CD4-positive, alpha-beta T cell (primary cell): ENCODE measurements at regions of chr11 and their contacts with region 1.

Region 1: DNA sequence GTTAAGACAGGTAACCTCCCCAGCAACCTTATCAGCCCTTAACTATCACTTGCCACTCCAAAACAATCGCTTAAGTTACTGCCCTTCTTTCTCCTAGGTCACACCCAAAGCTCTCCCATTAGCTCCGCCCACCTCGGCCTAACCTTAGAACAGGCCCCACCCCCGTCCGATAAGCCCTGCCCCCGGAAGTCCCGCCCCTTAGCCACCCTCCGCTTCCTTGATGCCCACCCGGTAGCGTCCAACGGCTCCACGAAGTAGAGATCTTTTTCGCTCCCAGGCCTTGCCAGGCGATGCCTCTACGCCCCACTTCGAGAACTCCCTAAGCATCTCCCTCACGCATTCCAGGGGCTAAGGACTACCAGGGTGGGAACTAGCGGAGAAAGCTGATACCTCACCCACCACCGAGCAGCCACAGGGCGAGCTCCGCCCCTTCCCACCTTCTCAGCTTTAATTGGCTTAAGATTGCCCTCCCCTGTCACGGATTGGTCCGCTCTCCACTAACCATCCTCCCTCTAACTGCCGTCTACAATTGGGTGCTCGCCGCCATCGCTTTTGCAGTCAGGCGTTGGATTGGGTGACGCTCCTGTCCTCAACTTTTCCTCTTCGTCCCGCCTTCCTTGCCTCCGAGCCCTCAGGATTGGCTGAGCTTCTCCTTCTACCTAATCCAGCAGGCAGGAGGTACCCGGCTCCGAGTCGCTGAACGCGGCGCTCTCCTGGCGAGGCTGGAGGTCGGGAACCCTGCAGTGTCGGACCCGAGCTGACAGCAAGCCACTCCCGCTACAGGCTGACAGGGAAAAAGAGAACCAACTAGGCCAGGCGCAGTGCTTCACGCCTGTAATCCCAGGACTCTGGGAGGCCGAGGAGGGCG is at the start of gene ZBTB3:
- DNase-seq: peak; percentile 92 to 100 (median 97)
- ATAC-seq: peak; percentile 93
- H3K4me3 ChIP-seq: peak within 1 kb of the TSS; percentile 80
- H3K4me3 Mint-ChIP-seq: peak within 1 kb of the TSS; percentile 93
- H3K27ac ChIP-seq: peak within 1 kb of the TSS; percentile 84 to 88
- H3K27ac Mint-ChIP-seq: peak within 1 kb of the TSS; percentile 89
- H3K4me1 ChIP-seq: peaks cover 41% of the 10 kb centered on the region
- H3K4me1 Mint-ChIP-seq: peaks cover 35% of the 10 kb centered on the region
- H3K27me3 ChIP-seq: no peaks in the 10 kb centered on the region
- H3K27me3 Mint-ChIP-seq: no peaks in the 10 kb centered on the region
- CTCF ChIP-seq: no peak
- total RNA-seq, gene ZBTB3: 2.3 to 3.5 TPM

Region 2: DNA sequence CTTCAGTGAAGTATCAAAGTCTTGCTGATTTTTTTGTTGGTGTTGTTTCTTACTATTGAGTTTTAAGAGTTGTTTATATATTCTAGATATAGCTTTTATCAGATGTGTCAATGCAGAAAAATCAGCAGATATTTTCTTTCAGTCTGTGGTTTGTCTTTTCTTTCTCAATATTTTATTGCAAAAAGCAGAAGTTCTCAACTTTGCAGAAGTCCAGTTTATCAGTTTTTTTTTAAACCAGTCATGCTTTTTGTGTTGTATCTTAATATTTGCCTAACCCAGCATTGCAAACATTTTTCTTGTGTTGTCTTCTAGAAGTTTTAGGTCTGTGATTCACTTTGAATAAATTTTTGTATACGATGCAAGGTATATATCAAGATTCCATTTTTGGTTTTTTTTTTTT is 409.8 kb before region 1 on chr11:
- CTCF ChIA-PET with region 1: no interaction called
- POLR2A ChIA-PET with region 1: no interaction called
- intact Hi-C with region 1: no loop called
- DNase-seq: no peak
- ATAC-seq: no peak
- H3K4me3 ChIP-seq: no peak overlapping the region
- H3K4me3 Mint-ChIP-seq: no peak overlapping the region
- H3K27ac ChIP-seq: no peak overlapping the region
- H3K27ac Mint-ChIP-seq: no peak overlapping the region
- H3K4me1 ChIP-seq: no peaks in the 10 kb centered on the region
- H3K4me1 Mint-ChIP-seq: no peaks in the 10 kb centered on the region
- H3K27me3 ChIP-seq: no peaks in the 10 kb centered on the region
- H3K27me3 Mint-ChIP-seq: peaks cover 9% of the 10 kb centered on the region
- CTCF ChIP-seq: no peak

Region 3: DNA sequence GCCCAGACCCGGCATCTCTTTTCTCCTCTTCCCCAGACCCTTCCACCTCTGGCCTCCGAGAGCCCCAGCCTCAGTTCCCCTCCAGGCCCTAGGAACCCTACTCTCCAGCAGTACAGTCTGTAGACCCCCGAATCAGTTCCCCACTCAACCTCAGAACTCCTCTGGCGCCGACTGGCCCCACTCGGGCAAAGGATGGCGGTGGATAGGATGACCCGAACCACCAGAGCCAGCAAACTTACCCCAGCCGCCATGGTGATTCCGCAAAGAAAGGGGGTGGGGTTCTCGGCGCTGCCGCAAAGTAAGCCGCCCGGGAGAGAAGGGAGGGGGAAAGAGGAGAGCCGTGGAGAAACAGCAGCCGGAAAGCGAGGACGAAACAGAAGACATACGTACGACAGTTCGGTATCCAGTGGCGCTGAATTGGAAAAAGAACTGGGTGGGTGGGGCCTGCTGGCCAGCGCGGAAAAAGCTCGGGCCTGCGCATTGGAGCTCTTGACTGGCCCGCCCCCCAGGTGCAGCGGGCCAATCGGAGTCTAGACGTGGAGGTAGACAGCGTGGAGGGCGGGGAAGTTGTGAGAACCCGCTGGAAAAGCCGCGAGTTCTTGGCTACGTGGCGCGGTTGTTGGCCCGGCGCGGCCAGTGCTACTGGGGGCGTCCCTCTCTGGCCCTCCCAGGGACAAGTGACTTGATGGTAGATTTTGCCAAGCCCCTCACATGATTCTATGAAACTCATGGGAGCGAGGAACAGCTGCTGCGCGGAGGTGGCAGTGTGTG is 180.2 kb before region 1 on chr11 and contains the start of gene EEF1G:
- CTCF ChIA-PET with region 1: no interaction called
- POLR2A ChIA-PET with region 1: interaction called, 17 read pairs
- intact Hi-C with region 1: no loop called
- DNase-seq: peak; percentile 95 to 100 (median 97)
- ATAC-seq: peak; percentile 94
- H3K4me3 ChIP-seq: peak within 1 kb of the TSS; percentile 82
- H3K4me3 Mint-ChIP-seq: peak within 1 kb of the TSS; percentile 93
- H3K27ac ChIP-seq: peak within 1 kb of the TSS; percentile 76 to 83
- H3K27ac Mint-ChIP-seq: peak within 1 kb of the TSS; percentile 89
- H3K4me1 ChIP-seq: peaks cover 48% of the 10 kb centered on the region
- H3K4me1 Mint-ChIP-seq: peaks cover 55% of the 10 kb centered on the region
- H3K27me3 ChIP-seq: no peaks in the 10 kb centered on the region
- H3K27me3 Mint-ChIP-seq: no peaks in the 10 kb centered on the region
- CTCF ChIP-seq: no peak
- total RNA-seq, gene EEF1G: 2,181 to 2,269 TPM

Region 4: DNA sequence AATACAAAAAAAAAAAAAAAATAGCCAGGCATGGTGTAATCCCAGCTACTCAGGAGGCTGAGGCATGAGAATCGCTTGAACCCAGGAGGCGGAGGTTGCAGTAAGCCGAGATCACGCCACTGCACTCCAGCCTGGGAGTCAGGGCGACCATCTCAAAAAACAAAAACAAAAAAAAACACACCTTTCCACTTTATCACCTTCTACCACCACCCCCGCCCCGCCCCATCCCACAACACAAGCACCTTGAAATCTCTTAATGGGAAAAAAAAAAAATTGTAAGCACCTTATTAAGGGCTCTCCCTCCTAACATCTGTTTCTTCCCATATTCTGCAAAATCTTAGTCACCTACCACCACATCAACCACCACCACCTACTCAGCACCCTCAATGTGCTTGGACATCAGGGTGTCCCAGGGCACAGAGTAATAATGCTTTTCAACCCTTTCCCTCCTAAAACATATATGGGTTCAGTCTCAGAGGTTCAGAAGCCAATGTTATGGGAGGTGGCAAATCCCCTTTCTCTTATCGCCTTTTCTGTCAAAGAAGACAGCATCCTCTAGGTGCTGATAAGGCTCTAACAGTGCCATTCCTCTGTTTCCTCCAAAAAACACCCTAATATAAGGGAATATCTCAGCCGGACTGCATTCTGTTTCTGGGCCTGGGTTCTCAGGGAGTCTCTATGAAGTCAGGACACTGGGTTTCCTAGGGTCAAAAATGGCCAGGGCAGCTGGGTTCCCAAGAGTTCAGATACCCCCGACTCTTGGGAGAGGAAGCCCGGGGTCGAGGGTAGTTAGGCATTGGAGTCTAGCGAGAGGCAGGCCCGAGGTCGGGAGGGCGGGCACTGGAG is 101.6 kb before region 1 on chr11:
- CTCF ChIA-PET with region 1: no interaction called
- POLR2A ChIA-PET with region 1: interaction called, 13 read pairs
- intact Hi-C with region 1: no loop called
- DNase-seq: peak in 4 of 14 experiments; percentile 43 to 62 (median 51)
- ATAC-seq: peak; percentile 5
- H3K4me3 ChIP-seq: peak overlapping the region; percentile 96
- H3K4me3 Mint-ChIP-seq: peak overlapping the region; percentile 94
- H3K27ac ChIP-seq: peak overlapping the region; percentile 89 to 94
- H3K27ac Mint-ChIP-seq: peak overlapping the region; percentile 97
- H3K4me1 ChIP-seq: peaks cover 28% of the 10 kb centered on the region
- H3K4me1 Mint-ChIP-seq: peaks cover 17% of the 10 kb centered on the region
- H3K27me3 ChIP-seq: no peaks in the 10 kb centered on the region
- H3K27me3 Mint-ChIP-seq: no peaks in the 10 kb centered on the region
- CTCF ChIP-seq: no peak

Region 5: DNA sequence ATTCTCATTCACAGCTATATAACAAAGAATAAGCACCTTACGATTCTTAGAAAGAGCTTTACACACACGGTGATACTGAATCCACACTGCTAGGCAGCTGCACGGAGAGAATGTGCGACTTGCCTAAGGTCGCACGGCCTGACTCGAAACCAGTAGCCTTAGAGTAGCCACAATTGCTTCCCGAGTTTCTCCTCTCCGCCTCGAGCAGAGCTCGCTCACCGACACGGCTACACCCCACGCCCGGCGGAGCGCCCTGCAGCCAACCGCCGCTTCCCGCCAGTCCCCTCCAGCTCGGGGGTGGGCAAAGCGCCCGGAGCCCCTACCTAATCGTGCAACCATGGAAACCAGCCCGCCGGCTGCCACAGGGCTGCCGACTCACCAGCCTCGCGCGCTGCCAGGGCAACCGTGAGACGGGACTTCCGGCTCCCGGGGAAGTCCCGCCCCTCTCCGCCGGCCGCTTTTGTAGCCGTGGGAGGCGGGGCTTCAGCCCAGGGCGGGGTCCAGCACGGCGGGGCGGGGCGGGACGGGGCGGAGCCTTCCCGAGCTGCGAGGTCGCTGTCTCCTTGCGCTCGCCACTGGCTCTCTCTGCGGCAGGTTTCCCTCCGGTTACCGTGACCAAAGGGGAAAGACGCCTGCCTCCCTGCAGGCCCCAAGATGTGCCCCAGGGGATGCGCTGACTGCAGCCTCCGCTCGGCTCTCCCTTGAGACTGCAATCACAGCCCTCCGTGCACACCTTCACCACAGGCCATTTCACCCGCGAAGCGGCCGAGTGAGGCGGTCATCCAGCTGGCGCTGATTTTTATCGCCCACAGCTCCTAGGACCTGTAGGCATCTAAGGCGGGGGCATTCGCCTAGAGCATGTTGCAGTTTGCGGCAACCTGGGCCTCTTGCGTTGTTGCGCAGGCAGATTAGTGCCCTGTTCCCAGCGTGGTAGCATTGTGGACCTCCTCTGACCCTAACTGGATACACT is 47.8 kb before region 1 on chr11:
- CTCF ChIA-PET with region 1: no interaction called
- POLR2A ChIA-PET with region 1: interaction called, 36 read pairs
- intact Hi-C with region 1: no loop called
- DNase-seq: peak; percentile 90 to 97 (median 94)
- ATAC-seq: peak; percentile 62
- H3K4me3 ChIP-seq: peak overlapping the region; percentile 79
- H3K4me3 Mint-ChIP-seq: peak overlapping the region; percentile 86
- H3K27ac ChIP-seq: peak overlapping the region; percentile 65 to 84
- H3K27ac Mint-ChIP-seq: peak overlapping the region; percentile 92
- H3K4me1 ChIP-seq: peaks cover 49% of the 10 kb centered on the region
- H3K4me1 Mint-ChIP-seq: peaks cover 42% of the 10 kb centered on the region
- H3K27me3 ChIP-seq: no peaks in the 10 kb centered on the region
- H3K27me3 Mint-ChIP-seq: no peaks in the 10 kb centered on the region
- CTCF ChIP-seq: no peak

Region 6: DNA sequence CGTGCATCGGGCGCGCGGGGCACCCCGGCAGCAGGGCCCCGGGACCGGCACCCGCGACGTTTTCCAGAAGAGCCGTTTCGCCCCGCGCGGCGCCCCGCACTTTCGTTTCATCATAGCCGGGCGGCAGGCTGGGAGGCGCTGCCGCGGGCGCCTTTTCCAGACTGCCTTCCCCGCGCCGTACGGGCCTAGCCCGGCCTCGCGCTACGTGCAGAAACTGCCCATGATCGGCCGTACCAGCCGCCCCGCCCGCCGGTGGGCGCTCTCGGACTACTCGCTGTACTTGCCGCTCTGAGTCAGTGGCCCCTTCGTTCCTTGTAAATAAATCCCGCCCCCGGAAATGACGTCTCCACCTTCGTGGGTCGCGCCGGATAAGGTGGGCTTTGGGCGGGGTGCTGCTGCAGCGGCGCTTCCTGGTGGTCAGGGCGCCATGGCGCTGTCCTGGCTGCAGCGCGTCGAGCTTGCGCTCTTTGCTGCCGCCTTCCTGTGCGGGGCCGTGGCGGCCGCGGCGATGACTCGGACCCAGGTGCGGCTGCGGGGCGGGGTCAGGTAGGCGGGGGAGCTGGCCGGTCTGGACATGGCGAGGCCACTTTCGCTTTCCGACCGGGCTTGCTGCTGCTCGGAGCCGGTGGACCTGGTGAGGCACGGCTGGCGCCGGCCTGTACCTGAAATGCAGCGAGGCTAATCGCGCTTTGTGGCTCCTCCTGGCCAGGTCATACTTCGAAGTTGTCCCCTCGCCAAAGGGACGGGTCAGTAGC is 33.2 kb after region 1 on chr11 and contains the start of gene TMEM179B:
- CTCF ChIA-PET with region 1: interaction called, 42 read pairs
- POLR2A ChIA-PET with region 1: interaction called, 76 read pairs
- intact Hi-C with region 1: loop called in 1 of 2 experiments (anchors 5 kb)
- DNase-seq: peak; percentile 90 to 99 (median 97)
- ATAC-seq: peak; percentile 61
- H3K4me3 ChIP-seq: peak within 1 kb of the TSS; percentile 77
- H3K4me3 Mint-ChIP-seq: peak within 1 kb of the TSS; percentile 98
- H3K27ac ChIP-seq: peak within 1 kb of the TSS; percentile 80 to 92
- H3K27ac Mint-ChIP-seq: peak within 1 kb of the TSS; percentile 98
- H3K4me1 ChIP-seq: peaks cover 53% of the 10 kb centered on the region
- H3K4me1 Mint-ChIP-seq: peaks cover 55% of the 10 kb centered on the region
- H3K27me3 ChIP-seq: no peaks in the 10 kb centered on the region
- H3K27me3 Mint-ChIP-seq: no peaks in the 10 kb centered on the region
- CTCF ChIP-seq: no peak
- total RNA-seq, gene TMEM179B: 34.7 to 37.4 TPM

Region 7: GRCh38 chr11:62855571-62856332 is 101.8 kb after region 1 on chr11:
- CTCF ChIA-PET with region 1: no interaction called
- POLR2A ChIA-PET with region 1: interaction called, 79 read pairs
- intact Hi-C with region 1: no loop called
- DNase-seq: peak; percentile 96 to 99 (median 98)
- ATAC-seq: peak; percentile 92
- H3K4me3 ChIP-seq: peak overlapping the region; percentile 79
- H3K4me3 Mint-ChIP-seq: peak overlapping the region; percentile 98
- H3K27ac ChIP-seq: peak overlapping the region; percentile 66 to 72
- H3K27ac Mint-ChIP-seq: peak overlapping the region; percentile 90
- H3K4me1 ChIP-seq: peaks cover 41% of the 10 kb centered on the region
- H3K4me1 Mint-ChIP-seq: peaks cover 63% of the 10 kb centered on the region
- H3K27me3 ChIP-seq: no peaks in the 10 kb centered on the region
- H3K27me3 Mint-ChIP-seq: no peaks in the 10 kb centered on the region
- CTCF ChIP-seq: no peak

Region 8: DNA sequence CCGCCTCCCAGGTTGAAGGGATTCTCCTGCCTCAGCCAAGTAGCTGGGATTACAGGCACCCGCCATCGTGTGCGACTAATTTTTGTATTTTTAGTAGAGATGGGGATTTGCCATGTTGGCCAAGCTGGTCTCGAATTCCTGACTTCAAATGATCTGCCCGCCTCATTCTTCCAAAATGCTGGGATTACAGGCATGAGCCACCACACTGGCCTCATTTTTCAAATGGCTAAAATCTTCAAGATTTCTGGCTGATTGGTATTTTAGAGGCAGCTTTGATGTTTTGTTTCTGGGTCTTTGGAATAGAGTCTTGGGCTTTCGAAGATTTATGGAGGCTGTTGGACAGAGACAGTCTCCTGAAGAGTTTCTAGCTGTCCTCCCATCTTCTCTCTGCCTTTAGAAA is 120.9 kb after region 1 on chr11:
- CTCF ChIA-PET with region 1: no interaction called
- POLR2A ChIA-PET with region 1: no interaction called
- intact Hi-C with region 1: no loop called
- DNase-seq: no peak
- ATAC-seq: no peak
- H3K4me3 ChIP-seq: no peak overlapping the region
- H3K4me3 Mint-ChIP-seq: no peak overlapping the region
- H3K27ac ChIP-seq: no peak overlapping the region
- H3K27ac Mint-ChIP-seq: no peak overlapping the region
- H3K4me1 ChIP-seq: peaks cover 5% of the 10 kb centered on the region
- H3K4me1 Mint-ChIP-seq: peaks cover 4% of the 10 kb centered on the region
- H3K27me3 ChIP-seq: no peaks in the 10 kb centered on the region
- H3K27me3 Mint-ChIP-seq: no peaks in the 10 kb centered on the region
- CTCF ChIP-seq: no peak